Activated T-helper 2 cell treated with anti-CD3 and anti-CD28 coated beads, Interferon-gamma antibody, Interleukin-2, Interleukin-4, amounts not matched to agents 10 μg/mL and 5 μg/mL and 100 μg/mL, durations not matched to agents 14 hours and 24 hours and 36 hours (primary cell): ENCODE measurements at regions of chr10 and their contacts with region 1.

Region 1: DNA sequence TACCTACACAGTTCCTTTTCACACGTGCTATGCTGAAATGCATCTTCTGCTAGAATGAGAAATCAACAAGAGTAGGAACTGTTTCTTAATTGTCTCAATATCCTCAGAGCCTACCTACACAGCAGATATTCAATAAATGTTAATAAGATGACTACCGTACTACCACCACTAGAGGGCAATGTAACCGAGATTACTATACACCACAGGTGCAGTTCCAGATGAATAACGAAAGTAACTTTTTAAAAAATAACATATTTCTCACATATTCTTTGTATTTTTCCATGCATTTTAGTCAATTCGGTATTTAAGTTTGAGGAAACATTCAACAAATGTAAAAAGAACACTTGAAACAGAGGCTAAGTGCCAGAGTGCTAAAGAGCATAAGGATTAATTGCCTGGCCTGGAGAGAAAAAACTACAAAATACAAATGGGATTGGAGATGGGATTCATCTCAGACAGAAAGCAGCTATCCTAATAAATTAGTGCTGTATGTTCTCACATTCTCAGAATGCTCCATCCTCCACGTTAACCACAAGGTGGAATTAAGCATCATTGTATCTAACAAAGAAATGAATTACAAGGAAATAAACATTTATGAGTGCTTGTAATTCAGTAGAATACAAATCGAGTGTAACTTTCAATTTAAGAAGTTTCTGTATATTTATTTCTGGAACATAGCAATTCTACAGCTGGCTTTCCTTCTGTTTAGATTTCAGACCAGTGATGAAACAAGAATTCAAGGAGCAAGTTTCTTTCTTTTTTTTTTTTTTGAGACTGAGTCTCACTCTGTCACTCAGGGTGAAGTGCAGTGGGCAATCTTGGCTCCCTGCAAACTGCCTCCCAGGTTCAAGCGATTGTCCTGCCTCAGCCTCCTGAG is 20.3 kb upstream of the HECTD2 start:
- DNase-seq: no peak
- H3K4me3 Mint-ChIP-seq: no peak overlapping the region
- H3K27ac Mint-ChIP-seq: no peak overlapping the region
- H3K4me1 Mint-ChIP-seq: peaks cover 8% of the 10 kb centered on the region
- H3K27me3 Mint-ChIP-seq: peaks cover 33% of the 10 kb centered on the region

Region 2: GRCh38 chr10:91298224-91298871 is 91.5 kb before region 1 on chr10:
- intact Hi-C with region 1: loop called (anchors 5 kb)
- DNase-seq: peak; percentile 69
- H3K4me3 Mint-ChIP-seq: peak overlapping the region; percentile 46
- H3K27ac Mint-ChIP-seq: no peak overlapping the region
- H3K4me1 Mint-ChIP-seq: peaks cover 9% of the 10 kb centered on the region
- H3K27me3 Mint-ChIP-seq: peaks cover 30% of the 10 kb centered on the region

Region 3: DNA sequence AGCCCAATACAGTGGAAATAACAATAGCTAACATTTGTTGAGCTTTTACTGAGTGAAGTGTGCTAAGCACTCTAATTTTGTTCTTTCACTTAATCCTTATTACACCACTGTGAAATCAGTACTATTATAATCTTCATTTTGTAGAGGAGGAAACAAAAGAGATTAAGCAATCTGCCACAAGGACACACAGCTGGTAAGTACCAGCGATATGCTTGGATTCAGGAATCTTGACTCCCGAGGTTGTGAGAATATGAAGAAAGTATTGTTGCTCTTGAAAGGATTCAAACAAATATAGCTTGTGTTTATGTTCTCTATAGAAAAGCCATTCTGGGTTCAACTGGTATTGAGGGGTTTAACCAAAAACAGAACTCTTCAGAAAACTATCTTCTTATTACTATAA is 73.4 kb before region 1 on chr10:
- intact Hi-C with region 1: no loop called
- DNase-seq: no peak
- H3K4me3 Mint-ChIP-seq: no peak overlapping the region
- H3K27ac Mint-ChIP-seq: no peak overlapping the region
- H3K4me1 Mint-ChIP-seq: peaks cover 6% of the 10 kb centered on the region
- H3K27me3 Mint-ChIP-seq: peaks cover 4% of the 10 kb centered on the region

Region 4: DNA sequence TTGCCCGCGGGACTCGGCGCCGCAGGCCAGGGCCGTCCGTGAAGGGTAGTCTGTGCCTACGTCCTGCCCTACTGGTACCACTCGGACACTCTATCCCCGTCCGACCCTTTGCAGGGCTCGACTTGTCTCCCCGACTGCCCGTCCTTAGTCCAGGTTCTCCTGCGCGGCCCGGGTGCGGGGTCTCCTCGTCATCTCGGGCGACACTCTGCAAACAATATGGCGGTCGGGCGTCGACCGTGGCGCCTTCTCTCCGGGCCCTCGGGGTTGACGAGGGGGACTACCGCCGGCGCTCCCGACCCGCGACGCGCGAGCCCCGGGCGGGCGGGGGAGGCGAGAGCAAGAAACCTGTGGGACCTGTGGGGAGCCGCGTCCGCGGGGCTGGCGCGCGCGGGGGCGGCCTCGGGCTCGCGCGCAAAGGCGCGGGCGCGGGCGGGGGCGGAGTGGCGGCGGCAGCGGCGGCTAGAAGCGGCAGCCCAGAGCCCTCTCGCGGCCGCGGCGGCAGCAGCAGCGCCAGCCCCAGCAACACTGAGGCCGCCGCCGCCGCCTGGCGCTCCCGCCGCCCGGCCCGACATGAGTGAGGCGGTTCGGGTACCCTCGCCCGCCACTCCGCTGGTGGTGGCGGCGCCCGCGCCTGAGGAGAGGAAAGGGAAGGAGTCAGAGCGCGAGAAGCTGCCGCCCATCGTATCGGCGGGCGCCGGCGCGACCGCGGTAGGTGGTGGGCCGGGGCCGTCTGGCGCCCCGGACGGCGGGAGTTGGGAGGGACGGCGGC is 20.2 kb after region 1 on chr10 and contains the start of gene HECTD2:
- intact Hi-C with region 1: loop called (anchors 2 kb)
- DNase-seq: peak; percentile 76
- H3K4me3 Mint-ChIP-seq: peak within 1 kb of the TSS; percentile 87
- H3K27ac Mint-ChIP-seq: peak within 1 kb of the TSS; percentile 90
- H3K4me1 Mint-ChIP-seq: peaks cover 16% of the 10 kb centered on the region
- H3K27me3 Mint-ChIP-seq: peaks cover 17% of the 10 kb centered on the region
- total RNA-seq, gene HECTD2: 6.6 and 8.2 TPM in 2 replicates

Region 5: GRCh38 chr10:91487911-91488582 is 98.2 kb after region 1 on chr10:
- intact Hi-C with region 1: loop called (anchors 10 kb)
- DNase-seq: no peak
- H3K4me3 Mint-ChIP-seq: no peak overlapping the region
- H3K27ac Mint-ChIP-seq: no peak overlapping the region
- H3K4me1 Mint-ChIP-seq: peaks cover 4% of the 10 kb centered on the region
- H3K27me3 Mint-ChIP-seq: no peaks in the 10 kb centered on the region

Region 6: GRCh38 chr10:91551856-91552255 is 162.0 kb after region 1 on chr10:
- intact Hi-C with region 1: loop called (anchors 2 kb)
- DNase-seq: no peak
- H3K4me3 Mint-ChIP-seq: no peak overlapping the region
- H3K27ac Mint-ChIP-seq: no peak overlapping the region
- H3K4me1 Mint-ChIP-seq: no peaks in the 10 kb centered on the region
- H3K27me3 Mint-ChIP-seq: peaks cover 2% of the 10 kb centered on the region

Region 7: DNA sequence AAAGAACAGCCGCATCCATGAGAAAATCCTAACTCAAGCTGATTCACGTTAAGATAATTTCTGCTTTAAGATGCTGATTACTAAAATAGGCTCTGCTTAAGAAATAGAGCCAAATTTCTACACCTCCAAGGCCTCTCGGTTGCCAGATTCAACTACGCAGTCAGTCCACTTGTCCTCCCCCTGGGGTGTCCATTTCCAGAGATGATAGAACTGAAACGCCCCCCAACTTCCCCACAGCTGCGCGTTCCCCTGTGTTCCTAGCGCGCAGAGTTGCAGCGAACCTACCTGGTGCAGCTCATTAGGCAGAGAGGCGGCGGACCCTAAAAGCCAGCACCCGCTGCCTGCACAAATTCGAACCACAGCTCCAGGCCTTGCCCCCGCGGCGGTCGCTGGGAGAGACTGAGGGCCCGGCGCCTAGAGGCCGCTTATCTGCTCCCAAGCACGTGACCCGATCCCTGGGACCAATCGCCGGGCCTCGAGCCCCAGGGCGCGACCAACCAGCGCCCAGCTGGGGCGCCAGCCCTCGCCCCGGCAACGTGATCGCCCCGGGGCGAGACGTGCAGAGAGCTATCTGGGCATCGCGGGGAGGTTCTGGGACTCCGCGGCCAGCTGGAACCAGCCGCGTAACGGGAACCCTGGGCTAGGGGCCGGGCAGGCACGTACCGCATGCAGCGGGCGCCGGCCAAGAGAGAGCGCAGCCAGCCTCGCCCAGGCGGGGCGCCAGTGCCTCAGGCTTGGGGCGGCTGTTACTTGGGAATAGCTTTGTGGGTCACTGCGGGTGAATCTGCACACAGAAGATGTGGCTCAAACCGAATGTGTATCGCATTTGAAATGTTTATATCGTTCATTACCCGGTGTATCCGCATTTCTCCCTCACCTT is 243.0 kb after region 1 on chr10 and contains the start of gene PPP1R3C:
- intact Hi-C with region 1: loop called (anchors 1 kb)
- DNase-seq: peak; percentile 41
- H3K4me3 Mint-ChIP-seq: peak within 1 kb of the TSS; percentile 72
- H3K27ac Mint-ChIP-seq: no peak within 1 kb of the TSS
- H3K4me1 Mint-ChIP-seq: peaks cover 6% of the 10 kb centered on the region
- H3K27me3 Mint-ChIP-seq: peaks cover 55% of the 10 kb centered on the region
- total RNA-seq, gene PPP1R3C: 0.14 and 0.21 TPM in 2 replicates

Region 8: GRCh38 chr10:91694170-91694794 is 304.4 kb after region 1 on chr10:
- intact Hi-C with region 1: loop called (anchors 5 kb)
- DNase-seq: no peak
- H3K4me3 Mint-ChIP-seq: no peak overlapping the region
- H3K27ac Mint-ChIP-seq: no peak overlapping the region
- H3K4me1 Mint-ChIP-seq: peaks cover 5% of the 10 kb centered on the region
- H3K27me3 Mint-ChIP-seq: peaks cover 2% of the 10 kb centered on the region